HepG2 (cell line): ENCODE measurements at regions of chr6 and their contacts with region 1.

Region 1: GRCh38 chr6:152206072-152206818 is 398.8 kb downstream of the ESR1 start:
- DNase-seq: peak; percentile 17
- ATAC-seq: peak; percentile 60
- H3K4me3 ChIP-seq: no peak overlapping the region
- H3K27ac ChIP-seq: no peak overlapping the region
- H3K4me1 ChIP-seq: peaks cover 9% of the 10 kb centered on the region; the same call in 1 of the 2 replicates
- H3K27me3 ChIP-seq: no peaks in the 10 kb centered on the region
- CTCF ChIP-seq: peak; percentile 59
- EP300 ChIP-seq: no peak
- POLR2A ChIP-seq: no peak
- RAD21 ChIP-seq: no peak

Region 2: GRCh38 chr6:152151920-152152319 is 54.3 kb before region 1 on chr6:
- CTCF ChIA-PET with region 1: no interaction called
- POLR2A ChIA-PET with region 1: no interaction called
- in situ Hi-C with region 1: no loop called
- intact Hi-C with region 1: no loop called
- DNase-seq: no peak
- ATAC-seq: no peak
- H3K4me3 ChIP-seq: no peak overlapping the region
- H3K27ac ChIP-seq: no peak overlapping the region
- H3K4me1 ChIP-seq: no peaks in the 10 kb centered on the region
- H3K27me3 ChIP-seq: no peaks in the 10 kb centered on the region
- CTCF ChIP-seq: no peak
- EP300 ChIP-seq: no peak
- POLR2A ChIP-seq: no peak
- RAD21 ChIP-seq: no peak

Region 3: DNA sequence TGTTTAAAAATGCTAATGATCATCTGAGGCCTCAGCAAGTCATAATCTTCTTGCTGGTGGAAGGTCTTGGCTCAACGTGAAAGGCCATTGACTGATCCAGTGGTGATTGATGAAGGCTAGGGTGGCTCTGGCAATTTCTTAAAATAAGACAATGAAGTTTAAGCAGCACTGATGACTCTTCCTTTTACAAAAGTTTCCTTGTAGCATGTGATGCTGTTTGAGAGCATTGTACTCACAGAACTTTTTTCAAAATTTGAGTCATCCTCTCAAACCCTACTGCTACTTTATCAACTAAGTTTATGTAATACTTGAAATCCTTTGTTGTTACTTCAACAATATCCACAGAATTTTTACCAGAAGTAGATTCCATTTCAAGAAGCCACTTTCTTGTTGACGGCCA is 16.5 kb before region 1 on chr6:
- CTCF ChIA-PET with region 1: no interaction called
- POLR2A ChIA-PET with region 1: no interaction called
- in situ Hi-C with region 1: no loop called
- intact Hi-C with region 1: no loop called
- DNase-seq: no peak
- ATAC-seq: no peak
- H3K4me3 ChIP-seq: no peak overlapping the region
- H3K27ac ChIP-seq: no peak overlapping the region
- H3K4me1 ChIP-seq: no peaks in the 10 kb centered on the region
- H3K27me3 ChIP-seq: no peaks in the 10 kb centered on the region
- CTCF ChIP-seq: no peak
- EP300 ChIP-seq: no peak
- POLR2A ChIP-seq: no peak
- RAD21 ChIP-seq: no peak

Region 4: GRCh38 chr6:152244998-152245630 is 38.9 kb after region 1 on chr6:
- CTCF ChIA-PET with region 1: no interaction called
- POLR2A ChIA-PET with region 1: no interaction called
- in situ Hi-C with region 1: no loop called
- intact Hi-C with region 1: loop called (anchors 5 kb)
- DNase-seq: no peak
- ATAC-seq: no peak
- H3K4me3 ChIP-seq: no peak overlapping the region
- H3K27ac ChIP-seq: no peak overlapping the region
- H3K4me1 ChIP-seq: peaks cover 20% of the 10 kb centered on the region
- H3K27me3 ChIP-seq: no peaks in the 10 kb centered on the region
- CTCF ChIP-seq: no peak
- EP300 ChIP-seq: no peak
- POLR2A ChIP-seq: no peak
- RAD21 ChIP-seq: no peak

Region 5: DNA sequence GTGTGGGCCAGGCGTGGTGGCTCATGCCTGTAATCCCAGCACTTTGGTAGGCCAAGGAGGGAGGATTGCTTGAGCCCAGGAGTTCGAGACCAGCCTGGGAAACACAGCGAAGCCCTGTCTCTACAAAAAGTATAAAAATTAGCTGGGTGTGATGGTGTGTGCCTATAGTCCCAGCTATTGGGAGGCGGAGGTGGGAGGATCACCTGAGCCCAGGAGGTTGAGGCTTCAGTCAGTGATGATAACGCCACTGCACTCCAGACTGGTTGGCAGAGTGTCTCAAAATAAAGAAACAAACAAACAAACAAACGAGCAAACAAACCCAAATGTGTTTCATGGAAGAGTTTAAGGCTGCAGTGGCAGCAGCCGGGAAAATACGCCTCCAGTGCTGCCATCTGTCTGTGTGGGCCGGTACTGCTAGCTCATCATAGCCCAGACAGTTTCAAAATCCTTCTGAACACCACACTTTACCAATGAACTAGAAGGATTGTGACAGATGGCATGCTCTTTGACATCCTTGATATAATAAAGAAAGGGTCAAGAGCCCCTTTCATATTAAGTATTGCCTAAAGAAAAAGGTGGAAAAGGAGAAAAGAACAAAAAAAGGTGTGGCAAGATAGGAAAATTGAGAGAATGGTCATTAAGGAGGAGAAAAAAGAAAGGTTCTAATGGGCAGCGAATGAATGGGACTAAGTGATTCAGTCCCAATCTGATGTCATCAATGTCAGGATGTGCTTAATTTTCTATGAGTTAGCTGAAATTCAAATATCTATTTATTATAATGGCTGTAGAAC is 132.3 kb after region 1 on chr6:
- CTCF ChIA-PET with region 1: no interaction called
- POLR2A ChIA-PET with region 1: no interaction called
- in situ Hi-C with region 1: no loop called
- intact Hi-C with region 1: loop called (anchors 1 kb)
- DNase-seq: peak; percentile 23
- ATAC-seq: peak; percentile 93
- H3K4me3 ChIP-seq: no peak overlapping the region
- H3K27ac ChIP-seq: no peak overlapping the region
- H3K4me1 ChIP-seq: no peaks in the 10 kb centered on the region
- H3K27me3 ChIP-seq: no peaks in the 10 kb centered on the region
- CTCF ChIP-seq: peak; percentile 87
- EP300 ChIP-seq: no peak
- POLR2A ChIP-seq: no peak
- RAD21 ChIP-seq: peak; percentile 72

Region 6: DNA sequence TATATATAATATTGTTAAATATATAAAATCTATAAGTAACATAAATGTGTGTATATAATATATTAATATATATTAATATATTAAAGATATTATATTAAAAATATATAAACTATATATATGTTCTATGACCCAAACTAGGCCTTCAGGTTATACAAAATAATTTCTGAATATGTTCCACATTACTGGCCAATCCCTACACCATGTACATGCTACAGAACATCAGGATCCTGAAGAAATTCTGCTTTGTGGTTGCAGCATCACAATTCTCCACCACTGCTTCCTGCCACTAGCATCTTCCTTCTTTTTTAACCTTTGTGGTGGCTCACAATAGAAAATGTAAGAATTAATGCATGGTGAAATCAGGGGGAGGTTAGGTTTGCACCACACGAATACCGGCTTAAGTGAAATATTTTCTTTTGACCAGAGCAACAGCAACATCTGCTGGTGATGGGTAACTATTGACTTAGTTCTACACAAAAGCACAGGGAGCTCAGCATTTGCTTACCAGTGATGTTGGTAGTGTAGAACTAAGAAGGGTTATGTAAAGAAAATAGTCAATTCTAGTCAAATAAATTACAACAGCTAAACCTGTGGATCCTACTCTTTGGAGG is 150.3 kb after region 1 on chr6:
- CTCF ChIA-PET with region 1: interaction called, 4 read pairs
- POLR2A ChIA-PET with region 1: no interaction called
- in situ Hi-C with region 1: no loop called
- intact Hi-C with region 1: loop called (anchors 1 kb)
- DNase-seq: peak; percentile 63
- ATAC-seq: peak; percentile 96
- H3K4me3 ChIP-seq: no peak overlapping the region
- H3K27ac ChIP-seq: no peak overlapping the region
- H3K4me1 ChIP-seq: no peaks in the 10 kb centered on the region
- H3K27me3 ChIP-seq: no peaks in the 10 kb centered on the region
- CTCF ChIP-seq: peak; percentile 82
- EP300 ChIP-seq: no peak
- POLR2A ChIP-seq: no peak
- RAD21 ChIP-seq: peak; percentile 76; the same call in 1 of the 2 replicates